ENCODE measurements at regions of chr7 and their contacts with region 1.

Region 1: DNA sequence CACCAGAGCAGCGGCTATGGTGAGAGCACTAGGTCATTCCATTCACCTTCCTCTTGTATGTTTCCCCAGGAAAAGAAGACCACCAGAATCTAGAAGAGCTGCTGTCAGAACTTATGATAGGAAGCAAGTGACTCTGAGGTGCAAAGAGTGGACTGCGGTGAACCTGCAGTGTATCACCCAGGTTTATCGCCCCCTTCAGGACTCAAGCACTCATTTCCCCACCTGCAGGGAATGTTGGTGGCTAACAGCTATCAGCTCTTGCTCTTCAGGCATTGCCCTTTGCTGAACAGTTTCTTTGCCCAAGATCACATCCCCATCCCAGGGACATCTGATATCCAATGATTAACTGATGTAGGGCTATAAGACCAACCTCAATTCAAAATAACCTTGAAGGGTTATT is 66.3 kb upstream of the IL6 start:
- DNase-seq: peak; percentile 56
- ATAC-seq: no peak
- H3K4me3 ChIP-seq: peak overlapping the region; percentile 38 to 56 (median 44)
- H3K4me3 Mint-ChIP-seq: peak overlapping the region; percentile 71
- H3K27ac ChIP-seq: peak overlapping the region; percentile 99 to 100
- H3K27ac Mint-ChIP-seq: peak overlapping the region; percentile 92
- H3K4me1 ChIP-seq: peaks cover 79 to 84% of the 10 kb centered on the region in 2 donors
- H3K4me1 Mint-ChIP-seq: peaks cover 78% of the 10 kb centered on the region
- H3K27me3 ChIP-seq: no peaks in the 10 kb centered on the region
- H3K27me3 Mint-ChIP-seq: no peaks in the 10 kb centered on the region
- CTCF ChIP-seq: peak; percentile 51

Region 2: GRCh38 chr7:22565315-22565811 is 95.4 kb before region 1 on chr7:
- CTCF ChIA-PET with region 1: interaction called, 49 read pairs
- POLR2A ChIA-PET with region 1: interaction called, 4 read pairs
- intact Hi-C with region 1: loop called (anchors 2 kb)
- DNase-seq: peak; percentile 74
- ATAC-seq: peak; percentile 66
- H3K4me3 ChIP-seq: no peak overlapping the region
- H3K4me3 Mint-ChIP-seq: peak overlapping the region; percentile 51
- H3K27ac ChIP-seq: peak overlapping the region; percentile 27 to 65
- H3K27ac Mint-ChIP-seq: peak overlapping the region; percentile 79
- H3K4me1 ChIP-seq: peaks cover 57 to 66% of the 10 kb centered on the region in 2 donors
- H3K4me1 Mint-ChIP-seq: peaks cover 67% of the 10 kb centered on the region
- H3K27me3 ChIP-seq: no peaks in the 10 kb centered on the region
- H3K27me3 Mint-ChIP-seq: no peaks in the 10 kb centered on the region
- CTCF ChIP-seq: no peak

Region 3: GRCh38 chr7:22672846-22673652 is 12.3 kb after region 1 on chr7:
- CTCF ChIA-PET with region 1: interaction called, 10 read pairs
- POLR2A ChIA-PET with region 1: interaction called, 5 read pairs
- intact Hi-C with region 1: loop called (anchors 1 kb)
- DNase-seq: peak; percentile 54
- ATAC-seq: peak; percentile 50
- H3K4me3 ChIP-seq: peak overlapping the region in 1 of 5 experiments; percentile 9
- H3K4me3 Mint-ChIP-seq: peak overlapping the region; percentile 72
- H3K27ac ChIP-seq: peak overlapping the region; percentile 69 to 81
- H3K27ac Mint-ChIP-seq: peak overlapping the region; percentile 91
- H3K4me1 ChIP-seq: peaks cover 76 to 80% of the 10 kb centered on the region in 2 donors
- H3K4me1 Mint-ChIP-seq: peaks cover 78% of the 10 kb centered on the region
- H3K27me3 ChIP-seq: no peaks in the 10 kb centered on the region
- H3K27me3 Mint-ChIP-seq: no peaks in the 10 kb centered on the region
- CTCF ChIP-seq: no peak